Activated CD8-positive, alpha-beta memory T cell treated with anti-CD3 and anti-CD28 coated beads, Interleukin-2, amount 10 ng/mL, durations not matched to agents 7 days and 5 days (primary cell): ENCODE measurements at regions of chr14 and their contacts with region 1.

Region 1: DNA sequence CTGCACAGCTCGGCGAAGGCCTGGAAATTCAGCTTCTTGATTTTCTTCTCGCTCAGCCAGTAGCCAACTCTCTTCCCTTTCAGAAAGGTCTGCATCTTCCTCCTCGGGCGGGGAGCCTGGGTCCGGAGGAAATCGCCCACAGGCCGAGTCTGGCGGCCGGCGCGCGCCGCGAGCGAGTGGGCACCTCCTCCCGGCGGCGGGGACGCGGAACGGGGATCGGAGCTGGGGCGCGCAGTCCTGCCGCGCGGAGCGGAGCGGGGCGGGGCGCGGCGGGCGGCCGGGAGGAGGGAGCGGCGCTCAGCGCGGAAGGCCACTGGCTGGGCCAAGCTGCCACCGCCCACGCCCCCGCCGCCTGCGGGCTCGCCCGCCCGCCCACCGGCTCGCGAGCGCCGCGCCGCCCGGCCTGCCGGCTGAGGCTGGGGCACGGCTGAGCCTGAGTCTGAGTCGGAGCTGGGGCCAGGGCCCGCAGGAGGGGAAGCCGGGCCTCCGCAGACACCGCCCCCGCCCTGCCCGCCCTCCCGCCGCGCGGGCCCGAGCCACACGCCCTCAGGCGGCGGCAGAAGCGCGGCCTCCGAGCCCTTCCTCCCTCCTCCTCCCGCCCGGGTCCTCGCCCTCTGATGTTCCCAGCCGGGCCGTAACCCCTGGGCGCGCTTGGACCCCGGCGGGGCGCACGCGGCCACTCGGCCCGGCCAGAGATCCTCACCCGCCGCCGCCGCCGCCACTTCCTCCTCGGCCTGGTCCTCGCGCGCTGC is 480 bp downstream of the ITPK1 start:
- DNase-seq: peak; percentile 88
- ATAC-seq: peak; percentile 79
- H3K4me3 Mint-ChIP-seq: peak overlapping the region; percentile 86
- H3K27ac Mint-ChIP-seq: peak overlapping the region; percentile 92
- H3K4me1 Mint-ChIP-seq: peaks cover 35% of the 10 kb centered on the region
- H3K27me3 Mint-ChIP-seq: no peaks in the 10 kb centered on the region

Region 2: GRCh38 chr14:93033983-93034670 is 81.1 kb before region 1 on chr14:
- CTCF ChIA-PET with region 1: interaction called, 44 read pairs
- DNase-seq: peak; percentile 80
- ATAC-seq: peak; percentile 93
- H3K4me3 Mint-ChIP-seq: no peak overlapping the region
- H3K27ac Mint-ChIP-seq: peak overlapping the region; percentile 80
- H3K4me1 Mint-ChIP-seq: peaks cover 45% of the 10 kb centered on the region
- H3K27me3 Mint-ChIP-seq: no peaks in the 10 kb centered on the region

Region 3: GRCh38 chr14:93073910-93074769 is 41.1 kb before region 1 on chr14:
- CTCF ChIA-PET with region 1: interaction called, 15 read pairs
- DNase-seq: no peak
- ATAC-seq: peak; percentile 47
- H3K4me3 Mint-ChIP-seq: no peak overlapping the region
- H3K27ac Mint-ChIP-seq: peak overlapping the region; percentile 71
- H3K4me1 Mint-ChIP-seq: peaks cover 63% of the 10 kb centered on the region
- H3K27me3 Mint-ChIP-seq: no peaks in the 10 kb centered on the region

Region 4: GRCh38 chr14:93103392-93104080 is 11.7 kb before region 1 on chr14:
- CTCF ChIA-PET with region 1: interaction called, 155 read pairs
- DNase-seq: peak; percentile 95
- ATAC-seq: peak; percentile 99
- H3K4me3 Mint-ChIP-seq: peak overlapping the region; percentile 76
- H3K27ac Mint-ChIP-seq: peak overlapping the region; percentile 98
- H3K4me1 Mint-ChIP-seq: peaks cover 52% of the 10 kb centered on the region
- H3K27me3 Mint-ChIP-seq: no peaks in the 10 kb centered on the region

Region 5: DNA sequence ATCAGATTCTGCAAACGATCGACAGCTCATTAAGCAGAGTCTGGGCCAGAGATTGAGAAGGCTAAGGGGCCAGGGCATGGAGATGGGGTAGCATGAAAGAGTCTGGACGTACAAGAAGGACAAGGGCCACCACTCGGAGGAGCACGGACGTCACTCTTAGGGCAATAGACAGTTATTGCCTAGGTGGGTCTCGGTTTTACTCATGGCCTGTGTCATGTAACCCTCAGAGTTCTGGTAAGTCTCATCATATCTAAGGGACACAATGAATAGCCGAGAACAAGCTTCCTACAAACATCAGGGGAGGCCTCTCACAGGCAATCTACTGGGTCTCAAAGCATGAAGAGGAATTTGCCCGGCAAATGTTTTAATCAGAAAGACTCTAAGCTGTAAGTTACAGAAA is 30.9 kb after region 1 on chr14:
- CTCF ChIA-PET with region 1: interaction called, 269 read pairs
- DNase-seq: peak; percentile 65
- ATAC-seq: peak; percentile 79
- H3K4me3 Mint-ChIP-seq: peak overlapping the region; percentile 1
- H3K27ac Mint-ChIP-seq: peak overlapping the region; percentile 78
- H3K4me1 Mint-ChIP-seq: peaks cover 17% of the 10 kb centered on the region
- H3K27me3 Mint-ChIP-seq: no peaks in the 10 kb centered on the region

Region 6: GRCh38 chr14:93206793-93207467 is 91.7 kb after region 1 on chr14 and contains the starts of genes GON7 and UBR7:
- CTCF ChIA-PET with region 1: interaction called, 12 read pairs
- DNase-seq: peak; percentile 95
- ATAC-seq: peak; percentile 93
- H3K4me3 Mint-ChIP-seq: peak within 1 kb of the TSS; percentile 88
- H3K27ac Mint-ChIP-seq: peak within 1 kb of the TSS; percentile 94
- H3K4me1 Mint-ChIP-seq: peaks cover 47% of the 10 kb centered on the region
- H3K27me3 Mint-ChIP-seq: no peaks in the 10 kb centered on the region
- total RNA-seq, gene GON7: 17.3 to 20.1 TPM
- total RNA-seq, gene UBR7: 40.2 to 41.6 TPM